ENCODE measurements at regions of chr12 and their contacts with region 1.

Region 1: DNA sequence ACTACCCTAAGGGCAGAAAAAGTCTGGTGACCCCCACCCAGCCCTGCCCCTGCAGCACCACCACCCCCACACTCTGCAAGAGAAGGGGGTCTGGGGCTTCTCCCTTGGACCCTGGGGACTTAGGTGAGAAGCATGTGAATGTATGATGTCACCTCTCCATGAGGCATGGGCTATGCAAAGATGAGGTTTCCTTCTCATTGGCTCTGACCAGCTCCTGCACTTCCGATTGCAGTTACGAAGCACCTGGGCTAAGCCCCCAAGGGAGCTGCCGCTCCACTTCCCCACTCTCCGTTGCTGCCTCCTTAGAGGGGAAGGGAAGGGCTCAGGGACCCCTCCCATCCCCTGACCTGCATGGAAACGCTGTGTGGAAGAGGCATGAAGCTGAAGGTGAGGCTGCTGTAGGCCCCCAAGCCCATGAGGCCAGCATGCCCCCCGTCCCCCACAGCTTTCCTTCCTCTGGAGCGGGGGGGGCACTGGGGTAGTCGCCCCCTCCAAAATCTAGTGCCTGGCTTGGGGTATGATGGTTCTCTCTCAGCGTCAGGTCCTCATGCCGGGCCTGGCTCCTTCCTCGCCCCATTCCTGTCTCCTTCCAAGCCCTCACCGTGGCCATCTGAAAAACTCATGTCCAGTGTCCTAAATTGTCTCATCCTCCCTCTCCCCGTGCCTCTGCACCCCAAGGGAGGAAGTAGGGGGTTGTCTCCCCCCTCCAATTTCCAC is 5.5 kb upstream of the DDX23 start:
- DNase-seq: no peak

Region 2: GRCh38 chr12:48881686-48882314 is 24.4 kb after region 1 on chr12:
- intact Hi-C with region 1: loop called in 1 of 2 experiments (anchors 1 kb)
- DNase-seq: no peak

Region 3: GRCh38 chr12:48890657-48891418 is 33.4 kb after region 1 on chr12:
- intact Hi-C with region 1: loop called (anchors 2 kb)
- DNase-seq: peak; percentile 94